HEK293 (cell line): ENCODE measurements at regions of chr7 and their contacts with region 1.

Region 1: DNA sequence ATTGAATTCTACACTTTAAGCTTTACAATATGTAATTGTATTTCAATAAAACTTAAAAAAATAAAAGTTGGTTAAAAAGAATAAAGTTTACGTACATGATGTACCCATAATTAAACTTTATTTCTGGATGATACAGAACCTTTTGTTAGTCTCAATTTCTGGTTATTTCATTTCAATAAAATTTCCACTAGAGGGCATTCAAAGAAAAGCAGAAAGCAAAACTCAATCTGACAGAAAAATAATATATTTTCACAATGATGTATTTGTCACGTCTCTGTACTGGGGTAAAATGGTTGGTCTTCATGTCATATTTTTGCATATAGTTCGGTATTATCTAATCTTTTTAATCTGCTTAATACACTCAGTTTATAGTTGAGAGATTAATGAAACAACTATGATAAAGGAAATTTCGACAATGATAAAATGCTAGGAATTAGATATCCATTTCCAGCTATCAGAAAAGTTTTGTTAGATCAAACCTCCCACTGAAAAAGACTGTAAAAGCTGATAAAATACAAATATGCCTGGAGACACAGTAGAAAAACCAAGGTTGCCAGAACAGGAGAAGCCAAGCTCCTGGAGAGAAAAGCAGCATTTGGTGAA is 27.4 kb downstream of the ASZ1 start:
- H3K4me3 ChIP-seq: no peak overlapping the region
- H3K27ac ChIP-seq: no peak overlapping the region
- H3K4me1 ChIP-seq: no peaks in the 10 kb centered on the region
- CTCF ChIP-seq: no peak

Region 2: DNA sequence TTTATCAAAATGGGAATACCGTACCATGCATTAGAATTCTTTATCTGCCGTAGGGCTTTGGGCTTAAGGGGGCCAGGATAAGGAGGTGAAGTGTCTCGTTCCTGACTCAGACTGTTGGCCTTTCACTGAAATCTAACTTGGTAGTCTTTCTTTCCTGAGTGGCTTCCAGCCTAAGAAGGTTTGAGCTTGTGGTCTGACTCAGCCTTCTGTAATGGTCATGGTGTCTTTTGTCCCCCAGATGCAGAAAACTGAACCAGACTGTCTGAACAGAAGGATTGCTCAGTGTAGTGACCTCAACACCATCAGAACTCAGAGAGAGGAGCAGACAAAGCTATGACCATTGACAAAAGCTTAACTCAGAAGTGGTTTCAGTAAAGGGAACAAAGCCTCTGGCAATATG is 116.5 kb before region 1 on chr7:
- CTCF ChIA-PET with region 1: no interaction called
- POLR2A ChIA-PET with region 1: no interaction called
- H3K4me3 ChIP-seq: no peak overlapping the region
- H3K27ac ChIP-seq: no peak overlapping the region
- H3K4me1 ChIP-seq: no peaks in the 10 kb centered on the region
- CTCF ChIP-seq: no peak

Region 3: GRCh38 chr7:117375380-117375779 is 24.5 kb before region 1 on chr7:
- CTCF ChIA-PET with region 1: no interaction called
- POLR2A ChIA-PET with region 1: no interaction called
- H3K4me3 ChIP-seq: no peak overlapping the region
- H3K27ac ChIP-seq: no peak overlapping the region
- H3K4me1 ChIP-seq: no peaks in the 10 kb centered on the region
- CTCF ChIP-seq: no peak

Region 4: DNA sequence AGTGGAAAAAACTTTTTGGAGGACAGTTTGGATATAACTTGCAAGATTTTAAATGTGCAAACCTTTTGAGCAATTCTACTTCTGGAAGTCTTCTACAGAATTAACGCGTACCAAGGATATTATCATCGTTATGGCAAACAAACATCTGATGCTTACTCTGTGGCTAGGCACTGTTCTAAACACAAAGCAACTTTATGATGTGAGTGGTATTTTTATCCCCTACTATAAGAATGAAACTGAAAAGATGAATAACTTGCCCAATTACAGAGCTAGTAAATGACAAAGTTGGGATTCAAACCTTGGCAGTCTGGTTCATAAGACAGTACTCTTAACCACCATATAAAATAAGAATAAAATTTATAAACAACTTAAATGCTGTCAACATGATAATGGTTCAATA is 11.6 kb after region 1 on chr7:
- CTCF ChIA-PET with region 1: interaction called, 11 read pairs
- POLR2A ChIA-PET with region 1: no interaction called
- H3K4me3 ChIP-seq: no peak overlapping the region
- H3K27ac ChIP-seq: no peak overlapping the region
- H3K4me1 ChIP-seq: no peaks in the 10 kb centered on the region
- CTCF ChIP-seq: no peak

Region 5: GRCh38 chr7:117715784-117716445 is 316.0 kb after region 1 on chr7:
- CTCF ChIA-PET with region 1: interaction called, 17 read pairs
- POLR2A ChIA-PET with region 1: no interaction called
- H3K4me3 ChIP-seq: no peak overlapping the region
- H3K27ac ChIP-seq: no peak overlapping the region
- H3K4me1 ChIP-seq: no peaks in the 10 kb centered on the region
- CTCF ChIP-seq: 0 out of 2 replicates have a peak, but pooled peaks have one; percentile 56

Region 6: GRCh38 chr7:118429141-118429540 is 1029.2 kb after region 1 on chr7:
- CTCF ChIA-PET with region 1: no interaction called
- POLR2A ChIA-PET with region 1: no interaction called
- H3K4me3 ChIP-seq: no peak overlapping the region
- H3K27ac ChIP-seq: no peak overlapping the region
- H3K4me1 ChIP-seq: no peaks in the 10 kb centered on the region
- CTCF ChIP-seq: no peak